ENCODE measurements at regions of chr4 and their contacts with region 1.

Region 1: GRCh38 chr4:80125252-80126177 is 52.5 kb upstream of the ANTXR2 start:
- DNase-seq: peak; percentile 81
- H3K4me3 Mint-ChIP-seq: peak overlapping the region; percentile 35
- H3K27ac Mint-ChIP-seq: peak overlapping the region; percentile 77
- H3K4me1 Mint-ChIP-seq: peaks cover 51% of the 10 kb centered on the region
- H3K27me3 Mint-ChIP-seq: no peaks in the 10 kb centered on the region

Region 2: DNA sequence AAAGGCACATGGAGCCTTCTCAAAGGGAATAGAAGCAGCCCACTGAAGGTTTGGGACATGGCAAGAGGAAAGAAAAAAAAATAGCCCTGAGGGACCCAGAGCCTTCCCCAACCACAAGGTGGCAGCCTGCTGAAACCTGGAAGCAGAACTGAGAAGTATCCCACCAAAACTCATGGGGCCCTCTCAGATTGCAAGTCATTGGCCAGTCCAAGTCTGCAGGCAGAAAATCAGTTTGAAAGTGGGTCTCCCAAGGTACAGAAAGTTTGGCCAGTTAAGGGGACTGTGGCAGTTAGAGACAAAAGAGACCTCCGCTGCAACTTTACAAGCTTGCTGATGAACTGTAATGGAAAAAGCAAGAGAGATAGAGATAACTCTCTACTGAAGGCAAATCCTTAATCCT is 208.3 kb before region 1 on chr4:
- intact Hi-C with region 1: loop called (anchors 5 kb)
- DNase-seq: peak; percentile 83
- H3K4me3 Mint-ChIP-seq: no peak overlapping the region
- H3K27ac Mint-ChIP-seq: no peak overlapping the region
- H3K4me1 Mint-ChIP-seq: peaks cover 12% of the 10 kb centered on the region
- H3K27me3 Mint-ChIP-seq: no peaks in the 10 kb centered on the region

Region 3: DNA sequence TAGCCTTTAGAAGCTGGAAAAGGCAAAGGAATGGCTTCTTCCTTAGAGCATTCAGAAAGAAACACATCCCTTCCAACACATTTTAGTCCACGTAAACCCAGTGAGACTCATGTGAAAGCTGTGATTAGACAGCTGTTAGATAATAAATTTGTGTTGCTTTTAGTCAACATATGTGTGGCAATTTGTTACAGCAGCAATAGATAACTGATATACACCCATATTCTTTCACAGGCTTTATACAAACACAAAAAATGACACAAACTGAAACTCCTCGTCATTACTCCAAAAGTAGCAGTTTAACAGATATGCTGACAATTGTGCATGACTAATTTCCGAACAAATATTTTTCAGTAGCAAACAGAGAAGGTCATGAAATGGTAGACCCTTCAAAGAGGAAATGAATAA is 117.8 kb before region 1 on chr4:
- intact Hi-C with region 1: loop called (anchors 5 kb)
- DNase-seq: no peak
- H3K4me3 Mint-ChIP-seq: peak overlapping the region; percentile 51
- H3K27ac Mint-ChIP-seq: peak overlapping the region; percentile 85
- H3K4me1 Mint-ChIP-seq: peaks cover 53% of the 10 kb centered on the region
- H3K27me3 Mint-ChIP-seq: no peaks in the 10 kb centered on the region

Region 4: DNA sequence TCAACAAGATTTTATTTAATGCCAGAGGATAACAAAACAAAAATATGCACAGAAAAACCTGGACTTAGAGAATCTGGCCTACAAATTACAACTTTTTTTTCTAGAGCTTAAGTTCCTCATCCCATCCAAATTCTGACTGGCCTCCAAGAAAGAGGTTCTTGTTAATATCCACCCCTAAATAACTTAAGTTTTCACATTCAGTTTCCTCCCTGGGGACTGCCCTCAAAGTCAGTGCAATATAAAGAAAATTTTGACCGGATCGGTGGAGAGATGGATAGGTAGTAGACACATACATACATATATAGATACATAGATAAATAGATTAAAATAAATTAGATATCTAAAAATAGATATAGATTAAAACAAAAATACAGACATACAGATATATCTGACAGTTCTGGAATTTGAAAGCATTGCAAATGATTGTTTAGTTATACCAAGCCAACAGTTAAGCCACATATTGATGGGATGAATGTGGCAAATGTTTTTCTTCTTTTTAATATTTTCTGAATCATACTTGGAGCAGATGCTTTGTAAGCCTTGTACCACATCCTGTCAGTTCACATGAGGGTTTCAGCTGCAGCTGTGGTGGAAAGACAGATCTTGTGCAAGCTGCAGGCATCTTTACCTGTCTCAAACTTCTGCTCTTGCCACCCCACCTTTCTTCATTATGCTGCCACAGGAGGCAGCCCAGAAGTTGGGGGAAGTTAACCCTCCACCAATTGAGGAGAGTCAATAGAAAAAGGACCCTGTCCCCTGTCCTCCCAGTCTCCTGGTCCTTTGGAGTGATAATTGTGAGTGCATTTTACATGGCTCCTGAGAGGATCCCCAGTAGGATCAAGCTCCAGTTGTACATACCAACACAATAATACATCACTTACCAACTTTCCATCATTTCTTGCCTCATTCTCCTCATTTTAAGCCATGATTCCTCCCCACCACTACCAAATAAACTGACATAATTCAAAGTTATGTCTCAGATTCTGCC is 13.3 kb after region 1 on chr4:
- intact Hi-C with region 1: loop called (anchors 1 kb)
- DNase-seq: peak; percentile 88
- H3K4me3 Mint-ChIP-seq: peak overlapping the region; percentile 56
- H3K27ac Mint-ChIP-seq: peak overlapping the region; percentile 80
- H3K4me1 Mint-ChIP-seq: peaks cover 59% of the 10 kb centered on the region
- H3K27me3 Mint-ChIP-seq: no peaks in the 10 kb centered on the region

Region 5: GRCh38 chr4:80153874-80154544 is 28.5 kb after region 1 on chr4:
- intact Hi-C with region 1: loop called (anchors 1 kb)
- DNase-seq: no peak
- H3K4me3 Mint-ChIP-seq: peak overlapping the region; percentile 43
- H3K27ac Mint-ChIP-seq: peak overlapping the region; percentile 88
- H3K4me1 Mint-ChIP-seq: peaks cover 18% of the 10 kb centered on the region
- H3K27me3 Mint-ChIP-seq: peaks cover 7% of the 10 kb centered on the region

Region 6: GRCh38 chr4:80173401-80173800 is 47.9 kb after region 1 on chr4:
- intact Hi-C with region 1: loop called (anchors 1 kb)
- DNase-seq: peak; percentile 89
- H3K4me3 Mint-ChIP-seq: peak overlapping the region; percentile 68
- H3K27ac Mint-ChIP-seq: peak overlapping the region; percentile 95
- H3K4me1 Mint-ChIP-seq: peaks cover 50% of the 10 kb centered on the region
- H3K27me3 Mint-ChIP-seq: no peaks in the 10 kb centered on the region

Region 7: GRCh38 chr4:80202190-80202711 is 76.7 kb after region 1 on chr4:
- intact Hi-C with region 1: loop called (anchors 5 kb)
- DNase-seq: peak; percentile 95
- H3K4me3 Mint-ChIP-seq: peak overlapping the region; percentile 77
- H3K27ac Mint-ChIP-seq: peak overlapping the region; percentile 71
- H3K4me1 Mint-ChIP-seq: peaks cover 23% of the 10 kb centered on the region
- H3K27me3 Mint-ChIP-seq: peaks cover 40% of the 10 kb centered on the region

Measured in activated CD4-positive, alpha-beta T cell treated with anti-CD3 and anti-CD28 coated beads, Interleukin-2, amount 10 ng/mL, durations not matched to agents 24 days and 14 days (primary cell).